ENCODE measurements at regions of chr11 and their contacts with region 1.

Region 1: GRCh38 chr11:128905345-128906184 is 14.4 kb downstream of the KCNJ5 start:
- DNase-seq: peak; percentile 52
- ATAC-seq: peak; percentile 68
- H3K4me3 Mint-ChIP-seq: peak overlapping the region; percentile 58
- H3K27ac Mint-ChIP-seq: no peak overlapping the region
- H3K4me1 Mint-ChIP-seq: peaks cover 15% of the 10 kb centered on the region
- H3K27me3 Mint-ChIP-seq: peaks cover 53% of the 10 kb centered on the region

Region 2: DNA sequence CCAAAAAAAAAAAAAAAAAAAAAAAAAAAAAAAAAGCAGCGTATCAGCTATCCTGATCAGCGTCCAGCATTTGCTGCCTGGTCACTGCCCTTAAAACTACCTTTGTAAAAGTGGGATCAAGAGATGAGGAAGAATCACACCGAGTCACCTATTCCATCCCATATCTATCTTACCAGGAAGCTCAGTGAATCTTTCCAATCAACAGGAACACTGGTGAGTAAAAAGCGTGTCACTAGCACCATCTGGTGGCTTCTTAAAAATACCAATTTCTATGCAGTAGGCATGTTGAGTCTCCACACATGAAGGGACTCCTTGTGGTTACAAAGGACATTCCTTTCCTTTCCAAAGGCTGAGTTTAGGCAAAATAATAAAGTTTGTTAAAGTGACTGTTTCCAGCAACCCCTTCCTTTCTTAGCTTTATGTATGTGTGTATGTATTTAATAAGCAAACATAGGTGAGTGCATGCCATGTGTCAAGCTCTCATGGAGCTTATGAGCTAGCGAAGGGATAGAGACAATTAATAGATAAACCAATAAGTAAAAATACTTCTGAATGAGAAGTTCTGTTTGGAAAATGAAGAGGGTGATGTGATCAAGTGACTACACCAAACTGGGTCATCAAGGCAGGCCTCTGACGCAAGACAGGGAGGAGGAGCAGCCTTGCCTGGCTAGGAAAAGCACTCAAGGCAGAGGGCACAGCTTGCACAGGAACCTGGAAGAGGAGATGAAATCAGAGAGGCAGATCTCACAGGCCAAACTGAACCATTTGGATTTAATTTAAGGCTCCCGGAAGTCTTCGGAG is 51.0 kb after region 1 on chr11:
- CTCF ChIA-PET with region 1: interaction called, 22 read pairs
- DNase-seq: no peak
- ATAC-seq: peak; percentile 66
- H3K4me3 Mint-ChIP-seq: no peak overlapping the region
- H3K27ac Mint-ChIP-seq: no peak overlapping the region
- H3K4me1 Mint-ChIP-seq: peaks cover 2% of the 10 kb centered on the region
- H3K27me3 Mint-ChIP-seq: peaks cover 50% of the 10 kb centered on the region